Activated CD4-positive, alpha-beta memory T cell treated with anti-CD3 and anti-CD28 coated beads for 36 hours (primary cell): ENCODE measurements at regions of chr16 and their contacts with region 1.

Region 1: GRCh38 chr16:56944954-56945839 is 13.3 kb downstream of the HERPUD1 start:
- DNase-seq: peak; percentile 60
- H3K4me3 Mint-ChIP-seq: no peak overlapping the region
- H3K27ac Mint-ChIP-seq: peak overlapping the region; percentile 94
- H3K4me1 Mint-ChIP-seq: peaks cover 55% of the 10 kb centered on the region
- H3K27me3 Mint-ChIP-seq: no peaks in the 10 kb centered on the region

Region 2: GRCh38 chr16:56700195-56700594 is 245.0 kb before region 1 on chr16:
- CTCF ChIA-PET with region 1: no interaction called
- POLR2A ChIA-PET with region 1: no interaction called
- intact Hi-C with region 1: no loop called
- DNase-seq: no peak
- H3K4me3 Mint-ChIP-seq: no peak overlapping the region
- H3K27ac Mint-ChIP-seq: no peak overlapping the region
- H3K4me1 Mint-ChIP-seq: peaks cover 7% of the 10 kb centered on the region
- H3K27me3 Mint-ChIP-seq: no peaks in the 10 kb centered on the region

Region 3: GRCh38 chr16:56807011-56807675 is 138.1 kb before region 1 on chr16:
- CTCF ChIA-PET with region 1: no interaction called
- POLR2A ChIA-PET with region 1: no interaction called
- intact Hi-C with region 1: no loop called
- DNase-seq: no peak
- H3K4me3 Mint-ChIP-seq: no peak overlapping the region
- H3K27ac Mint-ChIP-seq: no peak overlapping the region
- H3K4me1 Mint-ChIP-seq: no peaks in the 10 kb centered on the region
- H3K27me3 Mint-ChIP-seq: no peaks in the 10 kb centered on the region

Region 4: GRCh38 chr16:56866943-56867830 is 78.0 kb before region 1 on chr16:
- CTCF ChIA-PET with region 1: interaction called, 81 read pairs
- POLR2A ChIA-PET with region 1: interaction called, 4 read pairs
- intact Hi-C with region 1: no loop called
- DNase-seq: peak; percentile 48
- H3K4me3 Mint-ChIP-seq: no peak overlapping the region
- H3K27ac Mint-ChIP-seq: no peak overlapping the region
- H3K4me1 Mint-ChIP-seq: peaks cover 10% of the 10 kb centered on the region
- H3K27me3 Mint-ChIP-seq: no peaks in the 10 kb centered on the region

Region 5: GRCh38 chr16:56911771-56912571 is 33.2 kb before region 1 on chr16:
- CTCF ChIA-PET with region 1: no interaction called
- POLR2A ChIA-PET with region 1: interaction called, 7 read pairs
- intact Hi-C with region 1: loop called (anchors 2 kb)
- DNase-seq: no peak
- H3K4me3 Mint-ChIP-seq: no peak overlapping the region
- H3K27ac Mint-ChIP-seq: no peak overlapping the region
- H3K4me1 Mint-ChIP-seq: peaks cover 33% of the 10 kb centered on the region
- H3K27me3 Mint-ChIP-seq: no peaks in the 10 kb centered on the region

Region 6: GRCh38 chr16:57039148-57039812 is 94.1 kb after region 1 on chr16:
- CTCF ChIA-PET with region 1: no interaction called
- POLR2A ChIA-PET with region 1: interaction called, 7 read pairs
- intact Hi-C with region 1: loop called (anchors 2 kb)
- DNase-seq: peak; percentile 65
- H3K4me3 Mint-ChIP-seq: peak overlapping the region; percentile 27
- H3K27ac Mint-ChIP-seq: peak overlapping the region; percentile 98
- H3K4me1 Mint-ChIP-seq: peaks cover 88% of the 10 kb centered on the region
- H3K27me3 Mint-ChIP-seq: no peaks in the 10 kb centered on the region